ENCODE measurements at regions of chrX and their contacts with region 1.

Region 1: GRCh38 chrX:24081661-24082264 is 27.0 kb downstream of the EIF2S3 start:
- DNase-seq: peak; percentile 42
- ATAC-seq: peak; percentile 78
- H3K4me3 ChIP-seq: 0 out of 4 replicates have a peak overlapping the region, but pooled peaks of 1 of the 2 experiments have one; percentile 6
- H3K27ac ChIP-seq: peak overlapping the region; percentile 79
- H3K4me1 ChIP-seq: no peaks in the 10 kb centered on the region; the same call in none of the 2 replicates
- H3K27me3 ChIP-seq: no peaks in the 10 kb centered on the region
- CTCF ChIP-seq: peak; percentile 82

Region 2: DNA sequence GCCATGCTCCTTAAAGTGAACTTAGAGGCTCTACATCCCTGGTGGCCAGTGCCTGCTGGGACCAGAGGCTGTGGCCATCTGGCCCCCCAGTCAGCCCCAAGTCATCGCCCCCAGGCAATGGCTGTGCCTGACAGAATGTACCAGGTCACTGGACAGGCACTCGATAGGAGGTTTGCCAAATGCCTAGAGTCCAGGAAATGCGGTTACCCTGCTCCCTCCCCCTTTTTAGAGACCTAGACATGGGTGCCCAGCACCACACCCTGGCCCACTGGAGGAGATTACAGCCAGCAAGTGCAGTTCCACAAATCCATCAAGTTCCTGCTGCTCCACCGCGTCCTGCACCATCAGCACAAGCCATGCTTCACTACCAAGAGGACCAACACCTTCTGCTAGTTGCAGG is 51.5 kb after region 1 on chrX:
- CTCF ChIA-PET with region 1: no interaction called
- POLR2A ChIA-PET with region 1: no interaction called
- in situ Hi-C with region 1: no loop called
- intact Hi-C with region 1: loop called (anchors 10 kb)
- DNase-seq: no peak
- ATAC-seq: peak; percentile 82
- H3K4me3 ChIP-seq: peak overlapping the region in 1 of 2 experiments; percentile 42; a peak in 2 of 4 replicates
- H3K27ac ChIP-seq: peak overlapping the region; percentile 90
- H3K4me1 ChIP-seq: no peaks in the 10 kb centered on the region; the same call in 1 of the 2 replicates
- H3K27me3 ChIP-seq: no peaks in the 10 kb centered on the region
- CTCF ChIP-seq: no peak; the same call in 1 of the 2 replicates

Region 3: DNA sequence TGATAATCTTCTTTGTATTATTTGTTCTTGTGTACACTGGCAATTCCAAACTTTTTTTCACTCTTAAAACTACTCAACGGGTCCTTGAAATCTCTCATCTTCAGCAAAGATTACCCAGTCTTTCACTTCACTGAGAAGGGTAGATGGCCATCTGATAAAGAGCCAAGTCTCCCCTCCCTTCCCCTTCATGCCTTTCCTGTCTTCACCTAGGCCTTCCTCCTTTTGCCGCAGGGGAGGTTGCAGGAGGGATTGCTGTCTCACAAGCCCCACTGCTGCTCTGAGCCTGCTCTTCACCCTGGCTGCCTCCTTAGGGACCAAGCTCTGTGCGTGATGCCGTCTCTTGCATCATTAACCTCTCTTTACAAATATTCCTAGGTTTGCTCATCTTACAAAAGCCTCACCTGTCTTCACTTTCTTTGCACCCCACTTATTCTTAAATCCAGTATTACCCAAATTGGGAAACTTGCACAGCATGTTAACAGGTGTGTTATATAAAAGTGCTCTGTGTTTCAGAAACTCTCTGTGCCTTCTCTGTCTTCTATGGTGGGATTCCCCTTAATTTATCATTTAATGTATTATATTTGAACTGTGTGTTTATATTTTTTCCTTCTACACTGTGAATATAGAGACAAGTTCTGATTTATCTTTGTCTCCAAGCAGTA is 71.5 kb after region 1 on chrX:
- CTCF ChIA-PET with region 1: interaction called, 11 read pairs
- POLR2A ChIA-PET with region 1: no interaction called
- in situ Hi-C with region 1: no loop called
- intact Hi-C with region 1: no loop called
- DNase-seq: no peak
- ATAC-seq: no peak
- H3K4me3 ChIP-seq: peak overlapping the region; percentile 66 to 71
- H3K27ac ChIP-seq: peak overlapping the region; percentile 79
- H3K4me1 ChIP-seq: peaks cover 2% of the 10 kb centered on the region; the same call in 1 of the 2 replicates
- H3K27me3 ChIP-seq: no peaks in the 10 kb centered on the region
- CTCF ChIP-seq: no peak

Region 4: DNA sequence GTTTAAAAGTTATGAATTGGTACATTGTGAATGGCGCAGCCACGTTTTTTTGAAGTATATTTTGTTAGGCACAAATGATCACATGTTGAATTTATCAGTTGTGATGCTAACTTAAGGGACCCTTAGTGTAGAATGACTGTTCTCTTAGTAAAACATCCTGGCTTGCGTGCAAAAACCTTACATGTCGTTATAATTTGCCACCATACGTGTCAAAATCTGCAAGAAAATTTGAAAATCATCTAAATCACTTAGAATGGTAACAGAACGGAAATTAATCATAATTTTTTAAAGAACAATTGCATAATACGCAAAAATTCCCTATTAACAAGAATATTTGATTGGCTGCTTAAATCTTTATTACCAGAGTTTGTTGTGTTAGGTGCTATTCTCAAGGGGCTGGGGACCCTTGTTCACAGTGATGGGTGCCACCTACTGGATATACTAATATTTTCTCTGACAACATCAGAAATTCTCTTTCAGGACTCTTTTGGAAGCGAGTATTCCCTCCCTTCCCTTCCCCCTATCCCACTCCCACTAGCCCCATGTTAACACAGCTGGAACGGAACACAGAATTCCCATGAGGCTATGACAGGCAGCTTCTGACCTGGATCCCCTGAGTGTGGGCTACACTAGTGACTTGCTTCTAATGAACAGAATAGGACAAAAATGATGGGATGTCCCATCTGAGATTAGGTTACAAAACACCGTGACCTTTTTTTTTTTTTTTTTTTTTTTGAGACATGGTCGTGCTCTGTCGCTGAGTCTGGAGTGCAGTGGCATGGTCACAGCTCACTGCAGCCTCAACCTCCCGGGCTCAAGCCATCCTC is 160.3 kb after region 1 on chrX:
- CTCF ChIA-PET with region 1: no interaction called
- POLR2A ChIA-PET with region 1: interaction called, 4 read pairs
- in situ Hi-C with region 1: no loop called
- intact Hi-C with region 1: loop called (anchors 10 kb)
- DNase-seq: no peak
- ATAC-seq: peak; percentile 56; the same call in 1 of the 2 replicates
- H3K4me3 ChIP-seq: no peak overlapping the region
- H3K27ac ChIP-seq: no peak overlapping the region
- H3K4me1 ChIP-seq: no peaks in the 10 kb centered on the region; the same call in 1 of the 2 replicates
- H3K27me3 ChIP-seq: no peaks in the 10 kb centered on the region
- CTCF ChIP-seq: peak; percentile 59